HepG2 (cell line): ENCODE measurements at regions of chr9 and their contacts with region 1.

Region 1: GRCh38 chr9:32579706-32580331 is 6.9 kb upstream of the NDUFB6 start:
- DNase-seq: peak; percentile 38
- ATAC-seq: peak; percentile 51
- H3K4me3 ChIP-seq: no peak overlapping the region
- H3K27ac ChIP-seq: no peak overlapping the region
- H3K4me1 ChIP-seq: peaks cover 18% of the 10 kb centered on the region
- H3K27me3 ChIP-seq: no peaks in the 10 kb centered on the region
- CTCF ChIP-seq: peak; percentile 78
- EP300 ChIP-seq: no peak
- POLR2A ChIP-seq: no peak
- RAD21 ChIP-seq: peak; percentile 40

Region 2: DNA sequence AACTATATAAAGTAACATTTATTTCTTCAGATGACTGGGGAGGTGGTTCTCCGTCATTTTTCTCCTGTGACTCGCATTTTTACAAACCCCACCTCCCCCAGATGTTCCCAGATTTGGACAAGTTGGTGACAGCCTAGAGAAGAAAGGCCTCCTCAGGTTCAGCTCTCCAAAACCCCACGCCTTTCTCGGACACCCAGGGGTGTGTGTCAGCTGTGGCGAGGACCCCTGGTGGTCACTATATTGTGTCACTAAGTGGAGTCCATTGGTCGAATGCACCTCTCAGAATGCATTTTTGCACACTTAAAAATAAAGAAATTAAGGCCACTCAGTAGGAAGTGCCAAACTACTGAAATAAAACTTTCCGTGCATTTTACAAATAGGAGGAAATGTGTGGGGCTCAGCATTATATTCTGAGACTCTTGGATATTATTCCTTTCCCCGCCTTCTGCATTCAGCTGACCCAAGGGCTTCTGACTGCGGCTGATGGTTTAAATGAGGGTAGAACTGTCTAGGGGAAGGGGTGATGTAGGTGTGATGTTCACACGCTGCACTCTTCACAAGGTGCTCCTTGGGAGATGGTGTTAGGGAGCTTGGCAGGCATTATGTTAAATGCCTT is 147.8 kb before region 1 on chr9:
- CTCF ChIA-PET with region 1: no interaction called
- POLR2A ChIA-PET with region 1: no interaction called
- in situ Hi-C with region 1: no loop called
- intact Hi-C with region 1: loop called (anchors 1 kb)
- DNase-seq: peak; percentile 33
- ATAC-seq: peak; percentile 93
- H3K4me3 ChIP-seq: no peak overlapping the region
- H3K27ac ChIP-seq: no peak overlapping the region
- H3K4me1 ChIP-seq: peaks cover 12% of the 10 kb centered on the region
- H3K27me3 ChIP-seq: no peaks in the 10 kb centered on the region
- CTCF ChIP-seq: peak; percentile 72
- EP300 ChIP-seq: no peak
- POLR2A ChIP-seq: no peak
- RAD21 ChIP-seq: peak; percentile 57